MCF 10A (cell line): ENCODE measurements at regions of chr1 and their contacts with region 1.

Region 1: GRCh38 chr1:212566522-212567479 is 41.8 kb upstream of the ATF3 start:
- DNase-seq: peak; percentile 94
- H3K4me3 Mint-ChIP-seq: peak overlapping the region; percentile 72
- H3K27ac Mint-ChIP-seq: peak overlapping the region; percentile 78
- H3K4me1 Mint-ChIP-seq: peaks cover 17% of the 10 kb centered on the region
- H3K27me3 Mint-ChIP-seq: no peaks in the 10 kb centered on the region
- CTCF ChIP-seq: no peak

Region 2: GRCh38 chr1:212469701-212470458 is 96.9 kb before region 1 on chr1:
- CTCF ChIA-PET with region 1: interaction called, 8 read pairs
- POLR2A ChIA-PET with region 1: interaction called, 24 read pairs
- intact Hi-C with region 1: no loop called
- DNase-seq: peak; percentile 96
- H3K4me3 Mint-ChIP-seq: peak overlapping the region; percentile 49
- H3K27ac Mint-ChIP-seq: peak overlapping the region; percentile 90
- H3K4me1 Mint-ChIP-seq: peaks cover 10% of the 10 kb centered on the region
- H3K27me3 Mint-ChIP-seq: no peaks in the 10 kb centered on the region
- CTCF ChIP-seq: no peak

Region 3: DNA sequence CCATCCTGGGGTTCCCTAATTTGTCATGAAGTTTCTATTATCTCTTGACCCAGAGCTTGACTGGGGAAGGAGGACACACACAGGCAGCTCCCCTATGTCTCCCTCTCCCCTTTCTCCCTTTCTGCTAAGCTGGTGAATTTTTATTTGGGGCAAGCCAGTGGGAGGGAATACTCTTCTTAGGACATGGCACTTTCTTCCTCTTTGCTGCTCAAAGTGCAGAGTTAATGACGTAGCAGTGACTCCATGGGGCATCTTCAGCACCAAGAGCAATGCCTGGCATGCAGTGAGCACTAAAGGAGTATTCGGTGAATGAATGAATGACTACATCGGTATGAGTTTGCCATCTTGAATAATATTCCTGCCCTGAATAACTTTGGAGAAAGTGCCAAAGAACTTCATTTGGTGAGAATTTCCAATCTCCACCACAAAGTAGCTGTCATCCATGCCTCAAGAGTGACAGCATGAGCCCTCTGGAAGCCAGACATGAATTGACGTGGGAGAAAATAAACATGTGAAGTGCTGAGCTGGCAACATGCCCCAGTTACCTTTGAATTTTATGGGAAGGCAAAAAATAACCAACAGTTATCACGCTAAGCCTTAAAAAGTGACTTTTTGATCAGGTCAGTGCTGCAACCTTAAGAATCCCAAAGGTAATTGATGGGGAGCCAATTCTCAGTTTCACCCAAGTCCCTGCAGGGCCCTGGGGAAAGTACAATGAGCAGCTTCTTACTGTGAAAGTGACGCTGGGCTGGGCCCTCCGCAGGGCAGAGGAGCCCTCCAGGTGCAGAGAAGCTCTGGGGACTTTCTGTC is 19.6 kb after region 1 on chr1:
- CTCF ChIA-PET with region 1: interaction called, 3 read pairs
- POLR2A ChIA-PET with region 1: interaction called, 17 read pairs
- intact Hi-C with region 1: no loop called
- DNase-seq: no peak
- H3K4me3 Mint-ChIP-seq: no peak overlapping the region
- H3K27ac Mint-ChIP-seq: no peak overlapping the region
- H3K4me1 Mint-ChIP-seq: peaks cover 6% of the 10 kb centered on the region
- H3K27me3 Mint-ChIP-seq: peaks cover 38% of the 10 kb centered on the region
- CTCF ChIP-seq: no peak

Region 4: DNA sequence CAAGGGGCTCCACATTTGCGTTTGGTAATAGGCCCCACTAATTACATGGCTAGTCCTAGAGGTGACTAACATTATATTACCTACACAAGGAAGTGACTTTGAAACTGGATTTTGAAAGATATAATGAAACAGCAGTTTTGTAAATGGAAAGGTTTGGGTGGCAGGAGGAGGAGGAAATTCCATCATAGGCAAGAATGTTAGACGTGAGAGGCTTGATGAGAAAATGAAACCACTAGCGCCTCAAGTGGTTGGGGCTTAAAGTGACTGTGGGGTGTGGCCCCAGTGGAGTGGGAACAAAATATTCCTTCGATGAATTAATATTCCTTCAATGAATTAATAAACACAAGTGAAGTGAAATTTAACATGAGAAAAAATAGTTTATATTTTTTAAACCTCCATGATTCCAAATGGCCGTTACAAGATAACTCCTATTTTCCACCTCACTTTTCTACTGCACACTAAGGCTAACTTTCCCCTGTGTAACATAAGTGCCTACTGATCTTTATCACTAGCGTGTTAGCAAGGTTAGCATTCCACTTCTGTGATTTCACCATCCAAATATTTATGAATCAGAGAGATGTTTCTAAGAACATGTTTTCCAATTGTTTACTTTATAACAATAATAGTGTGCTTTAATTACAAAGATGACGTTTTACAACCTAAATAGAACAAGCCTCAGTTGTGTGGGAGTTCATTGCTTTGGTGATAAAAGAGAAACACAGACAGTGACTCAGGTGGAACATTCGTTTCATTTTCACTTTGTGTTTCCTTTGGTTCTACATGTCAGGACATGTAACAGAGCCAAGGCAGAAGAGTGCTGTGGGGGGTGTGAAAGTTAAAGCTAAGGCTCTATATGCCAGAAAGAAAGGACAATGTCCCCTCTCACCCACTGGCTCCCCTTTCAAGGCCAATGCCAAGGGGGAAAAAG is 29.2 kb after region 1 on chr1:
- CTCF ChIA-PET with region 1: interaction called, 9 read pairs
- POLR2A ChIA-PET with region 1: interaction called, 45 read pairs
- intact Hi-C with region 1: loop called (anchors 2 kb)
- DNase-seq: peak; percentile 97
- H3K4me3 Mint-ChIP-seq: peak overlapping the region; percentile 69
- H3K27ac Mint-ChIP-seq: peak overlapping the region; percentile 100
- H3K4me1 Mint-ChIP-seq: peaks cover 27% of the 10 kb centered on the region
- H3K27me3 Mint-ChIP-seq: peaks cover 30% of the 10 kb centered on the region
- CTCF ChIP-seq: peak; percentile 97